ENCODE measurements at regions of chr1 and their contacts with region 1.

Region 1: GRCh38 chr1:232635778-232636356 is 5.9 kb upstream of the SIPA1L2 start:
- DNase-seq: no peak
- ATAC-seq: peak; percentile 69

Region 2: DNA sequence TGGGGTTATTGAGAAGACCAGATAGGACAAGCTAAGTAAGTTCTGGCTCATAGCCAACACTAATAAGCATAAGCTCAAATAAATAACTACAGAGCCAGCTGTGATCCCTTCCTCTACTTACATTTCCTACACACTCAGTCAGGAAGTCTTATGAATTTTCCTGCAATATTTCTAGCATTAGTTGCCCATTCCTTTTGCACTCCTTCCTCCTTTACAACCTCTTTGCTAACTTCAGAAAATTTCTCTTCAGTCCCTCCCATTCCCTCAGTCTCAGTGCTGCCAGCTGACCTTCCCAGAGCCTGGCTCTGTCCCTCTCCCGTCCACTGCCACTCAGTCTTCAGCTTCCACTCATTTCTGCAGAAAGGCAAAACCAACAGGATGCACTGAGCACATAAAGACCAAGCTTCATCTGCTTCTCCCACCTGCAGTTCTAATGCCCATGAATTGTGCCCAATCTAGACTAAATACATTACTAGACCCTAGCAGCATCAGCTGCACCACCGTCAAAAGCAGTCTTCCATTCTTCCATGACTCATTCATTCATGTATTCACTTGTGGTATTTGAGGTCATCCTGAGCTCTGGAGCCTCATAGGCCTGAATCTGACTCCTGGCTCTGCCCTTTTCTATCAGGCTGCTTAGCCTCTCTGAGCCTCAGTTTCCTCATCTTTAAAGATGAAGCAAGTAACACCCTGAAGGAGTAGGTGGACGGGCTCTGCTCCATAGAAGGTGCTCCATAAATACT is 48.7 kb after region 1 on chr1:
- intact Hi-C with region 1: no loop called
- DNase-seq: no peak
- ATAC-seq: no peak

Region 3: GRCh38 chr1:233025157-233025915 is 389.5 kb after region 1 on chr1:
- intact Hi-C with region 1: loop called (anchors 2 kb)
- DNase-seq: no peak
- ATAC-seq: no peak

Region 4: GRCh38 chr1:233240829-233241682 is 605.2 kb after region 1 on chr1:
- intact Hi-C with region 1: loop called (anchors 1 kb)
- DNase-seq: peak; percentile 79
- ATAC-seq: peak; percentile 87

Measured in Right ventricle myocardium inferior (tissue), 1 donor.